ENCODE measurements at regions of chr1 and their contacts with region 1.

Region 1: GRCh38 chr1:179882243-179883039 is at the start of gene TOR1AIP1:
- DNase-seq: peak; percentile 91 to 98 (median 98)
- ATAC-seq: peak; percentile 87
- H3K4me3 ChIP-seq: peak within 1 kb of the TSS; percentile 96
- H3K4me3 Mint-ChIP-seq: peak within 1 kb of the TSS; percentile 93 to 99 (median 97)
- H3K27ac ChIP-seq: peak within 1 kb of the TSS; percentile 98
- H3K27ac Mint-ChIP-seq: peak within 1 kb of the TSS; percentile 99 to 100 (median 100)
- H3K4me1 ChIP-seq: peaks cover 27 to 37% of the 10 kb centered on the region in 2 donors
- H3K4me1 Mint-ChIP-seq: peaks cover 27 to 79% (median 63%) of the 10 kb centered on the region in 7 donors
- H3K27me3 ChIP-seq: no peaks in the 10 kb centered on the region
- H3K27me3 Mint-ChIP-seq: no peaks in the 10 kb centered on the region
- total RNA-seq, gene TOR1AIP1: 47.4 to 88.6 (median 59.5) TPM

Region 2: GRCh38 chr1:179025125-179025974 is 857.1 kb before region 1 on chr1 and contains the start of gene FAM20B:
- CTCF ChIA-PET with region 1: no interaction called
- POLR2A ChIA-PET with region 1: no interaction called
- intact Hi-C with region 1: loop called (anchors 1 to 2 kb)
- DNase-seq: peak; percentile 80 to 89 (median 86)
- ATAC-seq: peak; percentile 95
- H3K4me3 ChIP-seq: peak within 1 kb of the TSS; percentile 71
- H3K4me3 Mint-ChIP-seq: peak within 1 kb of the TSS; percentile 87 to 98 (median 91)
- H3K27ac ChIP-seq: peak within 1 kb of the TSS; percentile 84
- H3K27ac Mint-ChIP-seq: peak within 1 kb of the TSS; percentile 86 to 92 (median 89)
- H3K4me1 ChIP-seq: peaks cover 10 to 17% of the 10 kb centered on the region in 2 donors
- H3K4me1 Mint-ChIP-seq: peaks cover 35 to 60% (median 50%) of the 10 kb centered on the region in 7 donors
- H3K27me3 ChIP-seq: no peaks in the 10 kb centered on the region
- H3K27me3 Mint-ChIP-seq: peaks cover 0 to 31% (median 0%) of the 10 kb centered on the region in 5 donors
- total RNA-seq, gene FAM20B: 14.3 to 27.9 (median 25.2) TPM

Region 3: GRCh38 chr1:179706339-179706941 is 176.0 kb before region 1 on chr1:
- CTCF ChIA-PET with region 1: interaction called, 4 read pairs
- POLR2A ChIA-PET with region 1: interaction called, 9 read pairs
- intact Hi-C with region 1: loop called in 1 of 2 experiments (anchors 1 kb)
- DNase-seq: peak; percentile 27 to 78 (median 68)
- ATAC-seq: peak; percentile 33
- H3K4me3 ChIP-seq: no peak overlapping the region
- H3K4me3 Mint-ChIP-seq: no peak overlapping the region
- H3K27ac ChIP-seq: no peak overlapping the region
- H3K27ac Mint-ChIP-seq: peak overlapping the region in 6 of 9 donors; percentile 13 to 87 (median 72)
- H3K4me1 ChIP-seq: peaks cover 0 to 15% of the 10 kb centered on the region in 2 donors
- H3K4me1 Mint-ChIP-seq: peaks cover 6 to 25% (median 14%) of the 10 kb centered on the region in 7 donors
- H3K27me3 ChIP-seq: no peaks in the 10 kb centered on the region
- H3K27me3 Mint-ChIP-seq: peaks cover 0 to 6% (median 0%) of the 10 kb centered on the region in 5 donors

Region 4: GRCh38 chr1:179781962-179782361 is 100.5 kb before region 1 on chr1:
- CTCF ChIA-PET with region 1: no interaction called
- POLR2A ChIA-PET with region 1: no interaction called
- intact Hi-C with region 1: no loop called
- DNase-seq: no peak
- ATAC-seq: no peak
- H3K4me3 ChIP-seq: no peak overlapping the region
- H3K4me3 Mint-ChIP-seq: no peak overlapping the region
- H3K27ac ChIP-seq: no peak overlapping the region
- H3K27ac Mint-ChIP-seq: no peak overlapping the region
- H3K4me1 ChIP-seq: no peaks in the 10 kb centered on the region
- H3K4me1 Mint-ChIP-seq: no peaks in the 10 kb centered on the region
- H3K27me3 ChIP-seq: no peaks in the 10 kb centered on the region
- H3K27me3 Mint-ChIP-seq: peaks cover 0 to 11% (median 0%) of the 10 kb centered on the region in 5 donors

Region 5: DNA sequence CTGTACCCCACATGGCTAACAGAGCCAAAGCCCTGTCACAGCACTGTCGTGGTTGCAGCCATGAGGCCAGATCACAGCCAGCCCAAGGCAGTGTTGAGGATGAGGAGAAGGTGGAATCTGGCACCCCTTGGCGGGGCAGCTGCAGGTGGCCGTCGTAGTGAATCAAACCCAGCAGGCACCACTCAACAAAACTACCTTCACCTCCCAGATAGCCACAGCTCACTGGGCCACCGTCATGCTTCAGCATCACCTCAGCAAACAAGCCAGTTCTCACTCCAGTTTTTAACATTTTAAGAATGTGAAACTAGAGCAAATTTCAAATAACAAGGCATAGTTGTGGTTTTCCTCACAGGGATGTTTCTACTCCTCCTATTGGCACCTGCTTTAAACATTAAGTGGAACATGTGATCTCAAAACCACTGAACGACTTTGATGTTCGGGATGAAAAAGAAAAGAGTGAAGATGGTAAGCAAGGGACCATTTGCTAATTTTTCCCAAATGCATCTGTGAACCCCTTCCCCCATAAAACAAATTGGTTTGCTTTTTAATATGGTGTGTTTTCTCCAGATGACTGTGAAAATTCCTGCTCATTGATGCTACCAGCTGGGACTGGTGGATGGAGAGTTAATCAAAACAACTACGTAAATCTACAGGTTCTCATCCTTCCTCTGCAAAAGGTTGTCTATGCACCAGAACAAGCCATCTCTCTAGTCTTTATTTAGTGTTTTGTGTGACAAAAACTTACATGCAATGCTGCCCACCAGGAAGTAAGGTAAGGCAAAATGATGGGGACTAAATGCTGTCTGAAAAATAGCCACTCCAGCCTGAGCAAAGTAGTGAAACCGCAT is 50.4 kb before region 1 on chr1:
- CTCF ChIA-PET with region 1: interaction called, 4 read pairs
- POLR2A ChIA-PET with region 1: interaction called, 16 read pairs
- intact Hi-C with region 1: loop called in 1 of 2 experiments (anchors 1 kb)
- DNase-seq: peak in 7 of 9 donors; percentile 63 to 80 (median 76)
- ATAC-seq: peak; percentile 84
- H3K4me3 ChIP-seq: peak overlapping the region; percentile 56
- H3K4me3 Mint-ChIP-seq: peak overlapping the region; percentile 63 to 81 (median 72)
- H3K27ac ChIP-seq: peak overlapping the region; percentile 59
- H3K27ac Mint-ChIP-seq: peak overlapping the region; percentile 52 to 95 (median 91)
- H3K4me1 ChIP-seq: peaks cover 16 to 37% of the 10 kb centered on the region in 2 donors
- H3K4me1 Mint-ChIP-seq: peaks cover 23 to 47% (median 38%) of the 10 kb centered on the region in 7 donors
- H3K27me3 ChIP-seq: no peaks in the 10 kb centered on the region
- H3K27me3 Mint-ChIP-seq: no peaks in the 10 kb centered on the region

Region 6: DNA sequence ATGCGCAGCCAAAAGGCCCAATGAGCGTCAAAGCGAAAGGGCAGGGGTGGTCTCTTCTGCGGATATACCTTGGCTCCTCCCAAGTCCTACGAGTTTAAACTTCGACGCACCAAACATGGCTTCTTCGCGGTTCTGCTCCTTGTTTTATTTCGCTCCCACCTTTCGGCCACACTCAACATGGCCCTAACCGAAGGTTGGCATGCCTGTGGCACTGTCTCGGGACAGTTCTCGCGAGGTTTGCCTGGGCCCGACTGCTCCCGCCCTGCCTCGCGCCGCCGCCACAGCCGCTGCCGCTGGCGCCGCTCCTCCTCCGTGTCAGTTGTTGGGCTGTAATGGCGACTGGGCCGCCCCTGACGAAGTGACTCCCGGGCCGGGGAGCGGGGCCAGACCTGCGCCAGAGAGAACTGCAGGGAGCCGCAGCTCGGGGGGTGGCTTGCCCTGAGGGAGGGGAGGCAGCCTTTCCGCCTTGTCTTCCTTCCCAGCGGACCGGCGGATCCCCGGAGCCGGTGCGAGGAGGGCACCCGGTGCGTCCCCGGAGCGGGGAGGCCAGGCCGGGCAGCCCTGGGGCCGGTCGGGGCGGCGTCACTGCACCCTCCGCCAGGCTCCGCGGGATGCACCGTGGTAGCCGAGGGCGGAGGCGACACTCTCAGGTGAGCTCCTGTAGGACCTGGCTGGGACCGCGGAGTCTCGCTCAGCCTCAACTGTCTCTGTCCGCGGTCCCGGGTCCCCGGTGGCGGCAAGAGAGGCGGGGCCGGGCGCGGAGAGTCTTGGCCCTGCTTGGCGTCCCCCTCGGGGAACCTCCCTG is 72.3 kb after region 1 on chr1 and contains the start of gene CEP350:
- CTCF ChIA-PET with region 1: interaction called, 3 read pairs
- POLR2A ChIA-PET with region 1: interaction called, 82 read pairs
- intact Hi-C with region 1: loop called (anchors 1 kb)
- DNase-seq: peak; percentile 93 to 99 (median 98)
- ATAC-seq: peak; percentile 92
- H3K4me3 ChIP-seq: peak within 1 kb of the TSS; percentile 67
- H3K4me3 Mint-ChIP-seq: peak within 1 kb of the TSS; percentile 81 to 97 (median 93)
- H3K27ac ChIP-seq: peak within 1 kb of the TSS; percentile 95
- H3K27ac Mint-ChIP-seq: peak within 1 kb of the TSS; percentile 91 to 99 (median 97)
- H3K4me1 ChIP-seq: peaks cover 32 to 42% of the 10 kb centered on the region in 2 donors
- H3K4me1 Mint-ChIP-seq: peaks cover 34 to 72% (median 62%) of the 10 kb centered on the region in 7 donors
- H3K27me3 ChIP-seq: no peaks in the 10 kb centered on the region
- H3K27me3 Mint-ChIP-seq: no peaks in the 10 kb centered on the region
- total RNA-seq, gene CEP350: 56.1 to 90.1 (median 64.4) TPM

Region 7: GRCh38 chr1:180502360-180503273 is 620.2 kb after region 1 on chr1 and contains the start of gene ACBD6:
- CTCF ChIA-PET with region 1: no interaction called
- POLR2A ChIA-PET with region 1: interaction called, 7 read pairs
- intact Hi-C with region 1: loop called (anchors 1 kb)
- DNase-seq: peak; percentile 80 to 92 (median 89)
- ATAC-seq: peak; percentile 95
- H3K4me3 ChIP-seq: peak within 1 kb of the TSS; percentile 85
- H3K4me3 Mint-ChIP-seq: peak within 1 kb of the TSS; percentile 89 to 100 (median 97)
- H3K27ac ChIP-seq: peak within 1 kb of the TSS; percentile 79
- H3K27ac Mint-ChIP-seq: peak within 1 kb of the TSS; percentile 91 to 99 (median 98)
- H3K4me1 ChIP-seq: peaks cover 10 to 18% of the 10 kb centered on the region in 2 donors
- H3K4me1 Mint-ChIP-seq: peaks cover 17 to 55% (median 38%) of the 10 kb centered on the region in 7 donors
- H3K27me3 ChIP-seq: no peaks in the 10 kb centered on the region
- H3K27me3 Mint-ChIP-seq: peaks cover 0 to 5% (median 0%) of the 10 kb centered on the region in 5 donors
- total RNA-seq, gene ACBD6: 44.2 to 75.7 (median 47.3) TPM